Activated CD4-positive, alpha-beta memory T cell treated with anti-CD3 and anti-CD28 coated beads for 36 hours (primary cell): ENCODE measurements at regions of chr2 and their contacts with region 1.

Region 1: DNA sequence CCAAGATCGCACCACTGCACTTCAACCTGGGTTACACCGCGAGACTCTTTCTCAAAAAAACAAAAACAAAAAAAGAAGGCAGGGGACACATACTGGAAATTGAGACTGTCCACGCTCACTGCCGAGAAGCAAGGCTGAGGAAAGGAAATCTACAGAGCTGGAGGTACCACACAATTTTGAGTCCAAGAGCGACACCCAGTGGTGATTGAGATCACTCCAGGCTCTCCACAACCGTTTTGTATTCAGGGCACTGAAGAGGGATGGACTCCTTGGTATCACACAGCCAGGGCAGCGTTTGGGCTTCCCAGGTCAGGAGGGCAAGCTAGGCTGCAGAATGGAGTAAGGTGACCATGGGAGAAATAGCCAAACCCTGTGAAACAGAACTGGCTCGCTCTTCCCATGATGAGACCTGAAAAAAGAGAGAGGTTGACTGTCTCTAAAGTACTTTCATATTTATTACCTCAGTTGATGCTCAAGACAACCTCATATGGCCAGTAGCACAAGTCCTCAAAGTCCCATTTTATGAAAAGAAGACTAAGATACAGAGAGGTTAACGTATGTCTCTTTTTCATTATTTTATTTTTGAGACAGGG is 74.5 kb upstream of the YPEL5 start:
- DNase-seq: peak; percentile 76
- H3K4me3 Mint-ChIP-seq: no peak overlapping the region
- H3K27ac Mint-ChIP-seq: no peak overlapping the region
- H3K4me1 Mint-ChIP-seq: no peaks in the 10 kb centered on the region
- H3K27me3 Mint-ChIP-seq: peaks cover 25% of the 10 kb centered on the region

Region 2: DNA sequence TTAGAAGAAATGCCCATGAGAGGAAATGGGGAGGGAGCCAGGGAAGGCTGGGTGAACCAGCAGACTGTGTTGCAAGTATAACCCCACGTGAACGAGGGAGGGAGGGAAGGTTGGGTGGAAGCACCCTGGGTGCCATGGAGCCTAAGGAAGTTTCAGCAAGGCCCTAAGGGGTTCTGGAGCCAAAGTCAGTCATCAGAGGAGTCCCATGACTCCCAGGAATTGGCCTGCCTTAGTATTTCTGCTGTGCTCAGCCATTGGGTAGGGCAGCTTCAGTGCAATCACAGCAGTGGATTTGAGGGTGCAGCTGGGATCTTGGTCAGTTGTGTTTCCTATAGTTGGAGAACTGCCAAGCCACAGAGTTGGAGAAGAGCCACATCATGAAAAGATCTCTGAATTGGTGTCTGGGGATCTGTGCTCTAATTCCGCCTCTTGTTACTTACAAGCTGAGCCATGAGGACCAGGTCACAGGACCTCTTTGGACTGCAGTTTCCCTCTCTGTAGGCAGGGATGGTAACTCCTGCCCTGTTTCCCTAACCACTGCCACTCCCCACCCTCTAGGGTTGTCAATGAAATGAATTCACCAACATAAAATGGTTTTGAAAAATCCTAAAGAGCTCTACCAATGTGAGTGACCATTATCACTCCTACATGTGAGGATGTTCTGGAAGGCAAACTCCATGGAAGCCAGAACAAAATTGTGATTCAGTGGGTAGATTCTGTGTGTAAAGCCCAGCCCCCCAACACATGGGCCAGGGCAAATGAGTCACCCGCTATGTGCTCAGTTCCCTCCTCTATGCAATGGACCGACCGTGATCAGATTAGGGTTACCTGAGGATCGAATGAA is 848.3 kb before region 1 on chr2:
- CTCF ChIA-PET with region 1: no interaction called
- POLR2A ChIA-PET with region 1: no interaction called
- intact Hi-C with region 1: loop called (anchors 10 kb)
- DNase-seq: no peak
- H3K4me3 Mint-ChIP-seq: no peak overlapping the region
- H3K27ac Mint-ChIP-seq: no peak overlapping the region
- H3K4me1 Mint-ChIP-seq: no peaks in the 10 kb centered on the region
- H3K27me3 Mint-ChIP-seq: peaks cover 11% of the 10 kb centered on the region